ENCODE measurements at regions of chr7 and their contacts with region 1.

Region 1: DNA sequence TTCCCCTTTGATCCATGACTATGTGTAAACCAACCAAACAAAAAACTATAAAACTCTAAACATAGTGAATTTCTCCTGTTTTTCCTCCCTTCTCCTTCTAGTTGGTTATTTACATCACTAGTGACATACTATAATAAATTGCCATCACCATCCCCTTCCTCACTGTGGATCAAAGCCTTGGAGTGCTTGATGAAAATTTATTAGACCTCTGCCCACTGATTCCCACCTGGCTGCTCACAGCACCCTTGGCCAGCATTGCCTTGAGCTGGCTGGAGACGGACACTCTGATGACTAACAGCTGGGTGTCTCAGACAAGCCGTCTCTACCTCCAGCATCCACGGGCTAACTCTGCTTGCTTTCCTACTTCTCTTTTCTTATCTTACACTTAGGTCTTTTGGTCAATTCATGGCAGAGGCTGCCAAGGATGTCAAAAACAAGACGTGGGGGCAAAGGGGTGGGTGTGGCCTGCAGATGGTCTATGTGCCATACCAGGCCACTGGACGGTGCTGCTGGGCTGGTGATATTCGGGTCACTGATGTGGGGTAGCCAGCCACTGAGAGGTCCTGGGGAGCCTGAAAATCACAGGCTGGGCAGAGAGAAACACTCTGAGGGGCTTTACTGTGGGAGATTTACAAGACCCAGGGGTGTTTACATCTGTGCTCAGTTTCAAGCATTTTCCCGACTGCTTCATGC is 207.8 kb downstream of the TAX1BP1 start:
- DNase-seq: no peak
- ATAC-seq: no peak
- H3K4me3 ChIP-seq: no peak overlapping the region
- H3K27ac ChIP-seq: no peak overlapping the region
- H3K4me1 ChIP-seq: peaks cover 0 to 77% (median 36%) of the 10 kb centered on the region in 9 donors
- H3K27me3 ChIP-seq: no peaks in the 10 kb centered on the region
- CTCF ChIP-seq: no peak

Region 2: DNA sequence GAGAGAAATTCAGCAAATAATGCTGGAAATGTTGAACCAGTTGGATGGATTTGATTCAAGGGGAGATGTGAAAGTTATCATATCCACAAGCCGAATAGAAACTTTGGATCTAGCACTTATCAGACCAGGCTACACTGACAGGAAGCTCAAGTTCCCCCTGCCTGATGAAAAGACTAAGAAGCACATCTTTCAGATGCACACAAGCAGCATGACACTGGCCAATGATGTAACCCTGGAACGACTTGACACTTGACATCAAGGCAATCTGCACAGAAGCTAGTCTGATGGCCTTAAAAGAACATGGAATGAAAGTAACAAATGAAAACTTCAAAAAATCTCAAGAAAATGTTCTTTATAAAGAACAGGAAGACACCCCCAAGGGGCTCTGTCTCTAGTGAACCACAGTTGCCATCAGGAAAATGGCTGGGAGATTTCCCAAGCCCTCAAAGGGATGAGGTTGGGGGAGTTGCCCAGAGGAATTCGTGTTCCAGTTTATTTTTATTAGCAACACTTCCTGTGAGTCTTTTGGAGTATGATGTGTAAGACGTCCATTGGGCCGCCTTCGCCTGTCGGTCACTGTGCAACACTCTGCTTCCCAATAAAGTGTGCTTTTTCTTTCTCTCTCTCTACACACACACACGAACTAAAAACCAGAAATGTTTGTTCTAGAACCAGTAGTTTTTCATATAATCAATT is 485.0 kb before region 1 on chr7:
- intact Hi-C with region 1: no loop called
- DNase-seq: peak in 1 of 2 donors; percentile 18
- ATAC-seq: peak in 7 of 8 donors; percentile 56 to 82 (median 68)
- H3K4me3 ChIP-seq: peak overlapping the region in 1 of 10 donors; percentile 8
- H3K27ac ChIP-seq: peak overlapping the region in 2 of 10 donors; percentile 5 to 27
- H3K4me1 ChIP-seq: peaks cover 0 to 5% (median 0%) of the 10 kb centered on the region in 9 donors
- H3K27me3 ChIP-seq: peaks cover 0 to 40% (median 13%) of the 10 kb centered on the region in 7 donors
- CTCF ChIP-seq: no peak

Region 3: GRCh38 chr7:28002638-28003037 is 54.9 kb after region 1 on chr7:
- intact Hi-C with region 1: loop called in 1 of 10 experiments (anchors 10 kb)
- DNase-seq: no peak
- ATAC-seq: peak in 1 of 8 donors; percentile 20
- H3K4me3 ChIP-seq: no peak overlapping the region
- H3K27ac ChIP-seq: no peak overlapping the region
- H3K4me1 ChIP-seq: peaks cover 3 to 38% (median 15%) of the 10 kb centered on the region in 9 donors
- H3K27me3 ChIP-seq: no peaks in the 10 kb centered on the region
- CTCF ChIP-seq: no peak

Region 4: DNA sequence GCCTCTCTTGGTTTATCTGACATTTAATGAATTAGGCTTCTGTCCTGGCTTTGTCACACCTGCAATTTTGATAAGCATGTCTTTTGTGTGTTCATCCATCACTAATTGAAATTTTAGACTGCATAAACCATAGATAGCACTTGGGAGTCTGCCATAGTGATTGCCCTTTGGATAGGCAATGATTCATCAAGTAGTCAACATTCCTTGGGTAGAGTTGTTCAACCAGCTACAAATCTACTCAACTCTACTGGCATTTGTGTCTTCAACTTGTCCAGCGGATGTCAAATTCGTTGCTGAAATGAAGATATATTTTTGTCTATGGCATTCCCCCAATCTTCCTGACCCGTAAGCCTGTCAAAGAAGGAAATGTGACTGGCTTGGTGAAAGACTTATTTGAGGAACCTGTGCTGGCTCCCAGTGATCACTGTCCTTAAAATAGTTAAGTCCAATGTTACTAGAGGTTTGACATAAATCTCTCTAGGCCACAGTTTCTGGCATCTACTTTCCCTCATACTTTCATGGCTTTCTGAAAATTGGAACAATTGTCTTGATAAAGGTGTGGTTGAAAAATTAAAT is 430.9 kb after region 1 on chr7:
- intact Hi-C with region 1: no loop called
- DNase-seq: no peak
- ATAC-seq: peak in 1 of 8 donors; percentile 55
- H3K4me3 ChIP-seq: no peak overlapping the region
- H3K27ac ChIP-seq: no peak overlapping the region
- H3K4me1 ChIP-seq: peaks cover 0 to 11% (median 0%) of the 10 kb centered on the region in 9 donors
- H3K27me3 ChIP-seq: peaks cover 0 to 7% (median 0%) of the 10 kb centered on the region in 7 donors
- CTCF ChIP-seq: no peak